Endothelial cell of umbilical vein (primary cell): ENCODE measurements at regions of chr9 and their contacts with region 1.

Region 1: GRCh38 chr9:128034821-128035764 is 32.0 kb downstream of the NAIF1 start:
- DNase-seq: peak; percentile 84
- H3K4me3 ChIP-seq: no peak overlapping the region
- H3K27ac ChIP-seq: no peak overlapping the region
- H3K4me1 ChIP-seq: no peaks in the 10 kb centered on the region
- H3K27me3 ChIP-seq: no peaks in the 10 kb centered on the region
- CTCF ChIP-seq: peak; percentile 77 to 78
- POLR2A ChIP-seq: no peak

Region 2: GRCh38 chr9:127949827-127950512 is 85.1 kb before region 1 on chr9:
- CTCF ChIA-PET with region 1: interaction called, 203 read pairs
- POLR2A ChIA-PET with region 1: no interaction called
- dilution Hi-C with region 1: no loop called
- intact Hi-C with region 1: no loop called
- DNase-seq: no peak
- H3K4me3 ChIP-seq: no peak overlapping the region
- H3K27ac ChIP-seq: no peak overlapping the region
- H3K4me1 ChIP-seq: peaks cover 6% of the 10 kb centered on the region
- H3K27me3 ChIP-seq: no peaks in the 10 kb centered on the region
- CTCF ChIP-seq: no peak
- POLR2A ChIP-seq: no peak

Region 3: DNA sequence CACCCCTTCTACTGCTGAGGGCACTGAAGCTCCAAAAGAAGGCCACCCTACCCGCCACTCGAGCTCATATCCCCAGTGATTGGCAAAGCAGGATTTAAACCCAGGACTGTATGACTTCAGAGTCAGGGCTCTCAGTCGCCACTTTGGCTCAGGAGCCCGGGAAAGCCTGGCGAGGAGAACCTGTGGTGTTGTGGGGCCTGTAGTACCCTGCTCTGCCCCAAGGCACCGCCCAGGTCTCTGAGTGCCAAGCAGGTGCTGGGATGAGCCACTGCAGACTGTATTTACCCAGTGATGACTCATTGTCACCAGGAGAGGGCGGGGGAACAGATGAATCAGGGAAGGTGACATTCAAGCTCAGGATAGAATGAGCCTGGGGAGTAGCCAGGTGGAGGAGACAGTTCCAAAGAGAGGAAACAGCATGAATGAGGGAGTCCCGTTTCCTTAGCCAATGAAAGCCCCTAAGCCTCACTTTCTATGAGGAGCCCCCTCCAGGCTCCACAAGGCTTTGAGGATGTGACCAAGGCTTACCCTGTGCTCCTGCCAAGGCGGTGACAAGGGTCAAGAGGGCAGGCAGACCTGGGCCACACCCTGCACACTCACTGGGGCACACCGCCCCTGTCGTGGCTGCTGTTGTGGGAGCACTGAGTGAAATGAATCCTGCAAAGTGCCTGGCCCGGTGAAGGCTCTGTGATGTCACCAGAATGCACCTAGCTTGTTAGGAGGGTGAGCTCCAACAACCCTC is 79.6 kb before region 1 on chr9:
- CTCF ChIA-PET with region 1: interaction called, 21 read pairs
- POLR2A ChIA-PET with region 1: no interaction called
- dilution Hi-C with region 1: no loop called
- intact Hi-C with region 1: no loop called
- DNase-seq: peak; percentile 21
- H3K4me3 ChIP-seq: no peak overlapping the region
- H3K27ac ChIP-seq: no peak overlapping the region
- H3K4me1 ChIP-seq: peaks cover 6% of the 10 kb centered on the region
- H3K27me3 ChIP-seq: no peaks in the 10 kb centered on the region
- CTCF ChIP-seq: no peak
- POLR2A ChIP-seq: no peak

Region 4: DNA sequence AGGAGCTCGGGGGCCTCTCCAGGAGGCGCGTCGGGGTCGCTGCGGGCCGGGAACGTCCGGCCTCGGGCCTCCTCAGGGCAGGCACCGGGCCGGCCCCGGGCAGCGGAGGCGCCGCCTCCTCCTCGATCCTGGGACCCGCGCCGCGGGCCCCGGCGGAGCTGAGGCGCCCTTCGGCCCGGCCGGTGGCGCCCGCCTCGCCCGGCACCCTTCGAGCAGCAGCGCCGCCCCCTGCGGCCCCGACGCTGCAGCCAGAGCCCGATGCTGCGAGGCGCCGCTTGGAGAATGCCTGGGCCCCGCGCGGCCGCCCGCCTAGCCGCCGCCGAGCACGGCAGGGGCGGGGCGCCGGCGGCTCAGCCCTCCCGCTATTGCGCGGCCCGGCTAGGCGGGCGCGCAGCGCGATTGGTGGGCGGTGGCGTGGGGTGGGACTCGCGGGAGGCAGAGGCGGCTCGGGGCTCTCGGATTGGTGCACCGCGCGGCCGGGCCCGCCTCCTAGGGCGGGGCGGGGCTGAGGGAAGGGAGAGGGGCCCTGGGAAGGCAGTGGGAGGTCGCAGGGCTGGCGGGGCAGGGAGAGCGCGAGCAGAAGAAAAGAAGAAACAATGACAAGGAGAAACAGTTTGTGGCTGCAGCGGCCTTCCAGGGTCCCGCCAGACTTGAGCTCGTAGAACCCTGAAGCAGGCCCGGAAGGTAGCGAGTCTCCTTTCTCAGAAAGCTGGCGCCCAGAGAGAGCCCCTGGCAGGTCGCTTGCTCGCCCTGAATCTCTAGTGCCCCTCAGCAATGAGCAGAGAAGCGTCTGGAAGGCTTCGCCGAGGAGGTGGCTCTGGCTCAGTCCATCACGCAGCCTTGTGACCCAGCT is 54.2 kb before region 1 on chr9 and contains the start of gene EEIG1:
- CTCF ChIA-PET with region 1: interaction called, 12 read pairs
- POLR2A ChIA-PET with region 1: no interaction called
- dilution Hi-C with region 1: no loop called
- intact Hi-C with region 1: loop called (anchors 1 kb)
- DNase-seq: peak; percentile 94
- H3K4me3 ChIP-seq: peak within 1 kb of the TSS; percentile 26 to 61 (median 61)
- H3K27ac ChIP-seq: peak within 1 kb of the TSS; percentile 54
- H3K4me1 ChIP-seq: peaks cover 22% of the 10 kb centered on the region
- H3K27me3 ChIP-seq: no peaks in the 10 kb centered on the region
- CTCF ChIP-seq: no peak
- POLR2A ChIP-seq: peak; percentile 79
- total RNA-seq, gene EEIG1: 16.4 and 19.0 TPM in 2 replicates

Region 5: DNA sequence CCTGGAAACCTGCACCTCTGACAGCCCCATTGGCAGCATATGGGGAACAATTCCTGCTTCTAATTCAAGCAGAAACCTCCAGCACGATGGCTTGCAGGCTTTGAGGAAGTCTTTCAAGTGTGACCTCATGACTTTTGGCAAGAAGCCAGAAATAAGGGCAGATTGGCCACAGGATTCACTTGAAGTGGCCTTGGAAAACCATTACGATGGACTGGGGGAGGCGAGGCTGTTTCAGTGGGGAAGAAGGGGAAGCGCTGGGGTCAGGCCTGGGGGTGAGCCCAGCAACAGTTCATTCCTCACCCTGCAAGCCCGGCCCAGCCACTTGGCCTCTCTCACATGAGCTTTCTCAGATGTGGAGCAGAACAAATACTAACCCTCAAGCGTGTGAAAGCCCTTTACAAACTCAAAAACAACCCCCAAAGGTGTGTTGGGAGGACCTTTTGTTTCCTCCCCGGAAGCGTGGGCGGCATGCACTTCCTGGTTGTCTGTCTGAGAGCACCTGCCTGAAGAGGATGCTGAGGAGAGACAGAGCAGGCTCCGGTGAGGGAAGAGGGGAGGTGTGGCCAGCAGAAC is 27.4 kb before region 1 on chr9:
- CTCF ChIA-PET with region 1: interaction called, 13 read pairs
- POLR2A ChIA-PET with region 1: no interaction called
- dilution Hi-C with region 1: no loop called
- intact Hi-C with region 1: no loop called
- DNase-seq: peak; percentile 86
- H3K4me3 ChIP-seq: no peak overlapping the region
- H3K27ac ChIP-seq: peak overlapping the region; percentile 54
- H3K4me1 ChIP-seq: peaks cover 37% of the 10 kb centered on the region
- H3K27me3 ChIP-seq: no peaks in the 10 kb centered on the region
- CTCF ChIP-seq: no peak
- POLR2A ChIP-seq: no peak

Region 6: DNA sequence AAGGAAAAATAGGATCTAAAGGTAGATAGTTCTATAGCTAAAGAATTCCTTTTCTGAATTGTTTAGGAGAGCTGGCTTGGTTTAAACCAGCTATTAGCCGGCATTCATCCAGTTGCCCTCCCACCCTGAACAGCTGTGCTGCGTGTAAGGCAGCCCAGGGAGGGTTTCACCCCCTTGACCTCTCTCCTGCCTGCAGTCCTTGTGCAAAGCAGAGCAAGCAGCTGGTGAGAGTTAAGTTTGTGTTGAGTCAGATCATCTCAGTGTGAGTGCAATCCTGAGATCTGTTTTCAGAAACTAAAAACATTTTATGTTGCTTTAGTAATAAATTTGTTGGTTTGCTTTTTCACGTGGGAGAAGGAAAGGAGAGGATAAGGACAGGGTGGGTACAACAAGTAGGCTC is 46.0 kb after region 1 on chr9:
- CTCF ChIA-PET with region 1: interaction called, 3 read pairs
- POLR2A ChIA-PET with region 1: no interaction called
- dilution Hi-C with region 1: no loop called
- intact Hi-C with region 1: loop called (anchors 5 kb)
- DNase-seq: peak; percentile 41
- H3K4me3 ChIP-seq: no peak overlapping the region
- H3K27ac ChIP-seq: no peak overlapping the region
- H3K4me1 ChIP-seq: peaks cover 18% of the 10 kb centered on the region
- H3K27me3 ChIP-seq: no peaks in the 10 kb centered on the region
- CTCF ChIP-seq: no peak
- POLR2A ChIP-seq: no peak

Region 7: GRCh38 chr9:128106181-128106890 is 71.2 kb after region 1 on chr9:
- CTCF ChIA-PET with region 1: no interaction called
- POLR2A ChIA-PET with region 1: no interaction called
- dilution Hi-C with region 1: no loop called
- intact Hi-C with region 1: no loop called
- DNase-seq: no peak
- H3K4me3 ChIP-seq: no peak overlapping the region
- H3K27ac ChIP-seq: no peak overlapping the region
- H3K4me1 ChIP-seq: peaks cover under 1% of the 10 kb centered on the region
- H3K27me3 ChIP-seq: no peaks in the 10 kb centered on the region
- CTCF ChIP-seq: no peak
- POLR2A ChIP-seq: no peak

Region 8: GRCh38 chr9:128136816-128137793 is 102.0 kb after region 1 on chr9:
- CTCF ChIA-PET with region 1: no interaction called
- POLR2A ChIA-PET with region 1: no interaction called
- dilution Hi-C with region 1: no loop called
- intact Hi-C with region 1: no loop called
- DNase-seq: no peak
- H3K4me3 ChIP-seq: no peak overlapping the region
- H3K27ac ChIP-seq: no peak overlapping the region
- H3K4me1 ChIP-seq: no peaks in the 10 kb centered on the region
- H3K27me3 ChIP-seq: peaks cover 14 to 16% of the 10 kb centered on the region in 2 experiments
- CTCF ChIP-seq: no peak
- POLR2A ChIP-seq: no peak

Region 9: DNA sequence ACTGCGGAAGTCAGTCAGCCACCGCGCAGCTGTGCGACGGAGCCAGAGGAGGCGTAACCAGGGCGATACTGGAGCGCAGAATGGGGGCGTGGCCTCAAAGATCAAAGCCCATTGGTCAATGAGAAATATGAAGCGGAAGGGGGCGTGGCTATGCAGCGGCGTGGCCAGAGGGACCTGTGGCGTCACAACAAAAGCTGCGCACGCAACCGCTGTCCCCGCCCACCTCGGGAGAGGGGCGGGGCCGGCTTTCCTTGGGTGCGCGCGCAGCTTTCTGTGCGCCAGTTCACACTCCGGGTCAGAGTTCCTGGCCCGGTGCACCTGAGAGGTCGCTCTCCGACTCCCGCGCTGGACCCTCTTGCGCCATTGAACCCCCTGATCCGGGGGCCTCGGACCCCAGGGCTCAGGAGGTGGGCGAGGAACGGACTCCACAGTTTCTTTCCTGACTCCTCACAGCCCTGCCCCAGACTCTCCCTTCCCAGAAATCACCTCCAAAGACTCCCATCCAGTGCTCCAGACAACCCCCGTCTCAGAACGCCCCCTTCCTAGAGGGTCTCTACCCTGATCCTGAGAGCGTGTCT is 241.0 kb after region 1 on chr9 and contains the starts of genes GOLGA2 and SWI5:
- CTCF ChIA-PET with region 1: no interaction called
- POLR2A ChIA-PET with region 1: no interaction called
- dilution Hi-C with region 1: no loop called
- intact Hi-C with region 1: no loop called
- DNase-seq: peak; percentile 100
- H3K4me3 ChIP-seq: peak within 1 kb of the TSS; percentile 80 to 95 (median 81)
- H3K27ac ChIP-seq: peak within 1 kb of the TSS; percentile 89
- H3K4me1 ChIP-seq: peaks cover 27% of the 10 kb centered on the region
- H3K27me3 ChIP-seq: no peaks in the 10 kb centered on the region
- CTCF ChIP-seq: no peak
- POLR2A ChIP-seq: peak; percentile 89
- total RNA-seq, gene GOLGA2: 107 and 114 TPM in 2 replicates
- total RNA-seq, gene SWI5: 21.2 and 25.2 TPM in 2 replicates